ENCODE measurements at regions of chr1 and their contacts with region 1.

Region 1: DNA sequence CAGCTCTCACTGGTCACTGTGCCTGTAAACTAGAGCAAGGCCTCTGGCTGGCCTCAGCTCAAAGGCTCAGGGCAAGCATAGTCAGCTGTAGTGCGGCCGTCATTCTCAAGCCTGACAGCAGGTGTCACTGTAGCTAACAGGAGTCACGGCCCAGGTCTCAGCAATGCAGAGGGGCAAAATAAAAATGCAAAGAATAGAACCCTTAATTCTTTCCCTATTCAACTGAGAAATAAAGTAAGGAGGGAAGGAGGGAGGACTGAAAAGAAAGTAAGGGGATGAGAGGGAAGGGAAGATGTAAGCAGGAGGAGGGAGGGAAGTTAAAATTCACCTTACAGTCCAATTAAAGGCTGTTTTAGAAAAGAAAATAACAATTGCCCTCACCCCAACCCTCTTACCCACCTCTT is 106.1 kb downstream of the KIAA0319L start:
- DNase-seq: peak; percentile 94

Region 2: GRCh38 chr1:35564037-35564883 is 113.1 kb after region 1 on chr1:
- intact Hi-C with region 1: loop called (anchors 2 to 5 kb)
- DNase-seq: peak; percentile 91

Region 3: DNA sequence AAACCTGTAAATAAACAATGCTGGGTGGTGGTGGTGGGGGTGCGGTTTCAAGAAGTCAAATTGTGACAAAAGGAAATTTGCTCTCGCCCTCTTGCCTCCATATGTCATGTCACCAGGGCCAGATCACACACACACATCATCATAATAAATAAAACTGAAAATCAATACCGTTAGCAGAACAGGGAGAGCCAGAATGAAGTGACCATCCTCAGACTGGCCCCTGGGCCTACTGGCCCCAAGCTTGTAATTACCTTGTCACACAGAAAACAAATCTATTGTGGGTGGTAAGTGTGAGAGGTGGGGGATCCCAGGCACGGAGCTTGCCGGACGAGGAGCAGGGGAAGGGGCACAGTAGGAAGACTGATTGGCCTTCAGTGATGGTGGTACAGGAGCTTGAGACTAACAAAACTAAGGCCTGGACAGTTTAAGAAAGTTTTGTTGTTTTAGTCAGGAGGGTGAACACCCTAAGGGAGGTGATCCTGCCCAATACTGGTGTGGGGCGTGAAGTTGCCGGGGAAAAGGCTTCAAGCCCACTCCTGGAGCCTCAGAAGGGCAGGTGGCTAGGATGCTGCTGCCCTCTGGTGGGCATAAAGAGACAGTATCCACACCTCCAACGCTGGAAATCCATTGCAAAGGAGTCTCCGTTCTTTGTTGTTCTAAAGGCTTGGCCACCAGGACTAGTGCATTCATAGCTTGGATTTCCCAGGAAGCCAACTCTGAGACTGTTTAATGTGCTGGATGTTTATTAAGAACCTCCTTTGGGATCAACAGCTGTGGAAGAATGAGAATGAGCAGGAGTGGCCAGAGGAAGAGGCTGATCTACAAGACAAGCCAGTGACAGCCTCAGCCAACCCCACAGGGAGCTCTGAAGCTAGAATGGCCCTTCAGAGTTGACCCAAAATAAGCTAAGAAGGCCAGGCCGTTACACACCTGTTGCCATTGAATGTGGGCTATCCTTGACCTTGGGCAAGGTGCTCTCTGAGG is 275.6 kb after region 1 on chr1:
- intact Hi-C with region 1: loop called in 1 of 2 experiments (anchors 5 kb)
- DNase-seq: no peak

Region 4: GRCh38 chr1:35769759-35770446 is 318.8 kb after region 1 on chr1 and contains the start of gene CLSPN:
- intact Hi-C with region 1: loop called in 1 of 2 experiments (anchors 5 kb)
- DNase-seq: peak; percentile 97
- total RNA-seq, gene CLSPN: 0.76 to 0.93 TPM

Region 5: GRCh38 chr1:36471830-36472641 is 1020.9 kb after region 1 on chr1:
- intact Hi-C with region 1: loop called in 1 of 2 experiments (anchors 5 kb)
- DNase-seq: no peak

Measured in posterior vena cava (tissue), 2 donors.